Activated naive CD4-positive, alpha-beta T cell treated with anti-CD3 and anti-CD28 coated beads for 36 hours (primary cell): ENCODE measurements at regions of chr2 and their contacts with region 1.

Region 1: DNA sequence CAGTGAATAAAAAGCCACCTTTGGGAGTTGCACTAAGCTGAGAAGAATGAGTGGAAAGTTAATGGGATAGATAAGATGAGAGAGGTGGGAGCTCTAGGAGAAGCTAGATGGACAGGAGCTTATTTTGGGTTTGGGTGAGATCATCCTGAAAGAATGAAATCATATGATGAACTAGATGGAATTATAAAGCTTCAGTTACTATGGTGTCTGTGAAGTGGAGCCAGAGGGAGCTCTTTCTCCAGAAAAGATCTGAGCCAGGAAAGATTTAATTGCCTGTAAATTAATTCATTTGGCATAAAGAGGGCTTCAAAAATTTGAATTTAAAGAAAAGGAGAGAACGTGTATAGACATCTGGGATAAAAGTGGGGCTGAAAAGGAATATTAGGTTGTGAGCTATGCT is 10.3 kb downstream of the DNAH6 start:
- DNase-seq: no peak
- H3K4me3 Mint-ChIP-seq: no peak overlapping the region
- H3K27ac Mint-ChIP-seq: peak overlapping the region; percentile 50
- H3K4me1 Mint-ChIP-seq: peaks cover 17% of the 10 kb centered on the region
- H3K27me3 Mint-ChIP-seq: no peaks in the 10 kb centered on the region

Region 2: DNA sequence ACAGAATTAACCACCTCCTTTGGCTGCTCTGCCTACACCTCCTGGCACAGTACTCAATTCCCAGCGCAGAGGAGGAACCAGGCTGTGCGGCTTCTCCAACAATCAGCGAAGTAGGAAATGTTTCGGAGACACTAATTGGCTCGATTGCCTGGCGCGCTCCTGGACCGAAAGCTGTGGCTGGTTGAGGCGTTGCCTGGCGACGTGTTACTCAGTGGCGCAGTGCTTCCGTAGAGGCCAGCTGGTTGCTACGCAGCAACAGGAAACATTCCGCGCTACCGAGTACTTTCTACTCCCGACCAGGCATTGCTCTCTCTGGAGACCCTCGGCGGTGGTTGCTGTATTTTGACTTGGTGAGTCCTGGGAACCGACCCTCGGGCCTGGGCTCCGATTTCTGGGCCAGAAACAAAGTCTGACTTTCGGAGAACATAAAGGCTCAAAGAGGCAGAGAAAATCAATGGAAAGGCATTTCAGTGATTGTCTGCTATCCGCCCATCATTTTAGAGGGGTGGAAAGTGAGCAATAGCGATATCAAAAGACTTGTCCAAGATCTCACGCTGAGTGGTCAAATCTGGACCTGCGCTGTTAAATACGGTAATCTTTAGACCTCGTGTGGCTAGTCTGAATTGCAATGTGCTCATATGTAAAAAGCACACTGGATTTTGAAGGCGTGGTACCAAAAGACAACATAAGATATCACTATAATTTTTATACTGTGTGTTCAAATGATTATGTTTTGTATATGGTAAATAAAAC is 10.2 kb before region 1 on chr2 and contains the start of gene DNAH6:
- CTCF ChIA-PET with region 1: interaction called, 11 read pairs
- intact Hi-C with region 1: no loop called
- DNase-seq: peak; percentile 94
- H3K4me3 Mint-ChIP-seq: peak within 1 kb of the TSS; percentile 85
- H3K27ac Mint-ChIP-seq: no peak within 1 kb of the TSS
- H3K4me1 Mint-ChIP-seq: peaks cover 22% of the 10 kb centered on the region
- H3K27me3 Mint-ChIP-seq: no peaks in the 10 kb centered on the region
- total RNA-seq, gene DNAH6: 0.07 to 0.62 TPM

Region 3: DNA sequence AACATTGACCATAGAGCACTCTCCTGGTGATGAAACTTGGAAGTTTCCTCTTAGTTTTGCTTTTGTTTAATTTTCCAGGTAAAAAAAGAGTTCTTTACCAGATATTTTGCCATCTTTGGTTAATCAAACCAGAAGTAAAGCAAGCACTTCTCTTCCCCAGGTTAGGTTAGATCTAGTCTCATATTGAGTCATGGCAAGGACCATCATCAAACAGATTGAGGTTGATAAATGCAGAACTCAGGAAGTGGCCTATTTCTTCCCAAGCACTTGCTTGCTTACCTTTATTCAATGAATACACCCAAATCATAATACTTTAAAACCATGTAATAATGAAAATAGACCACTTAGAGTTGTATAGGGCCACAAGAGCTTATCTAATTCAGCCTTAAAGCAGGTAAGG is 13.2 kb after region 1 on chr2:
- CTCF ChIA-PET with region 1: interaction called, 7 read pairs
- intact Hi-C with region 1: loop called (anchors 1 kb)
- DNase-seq: no peak
- H3K4me3 Mint-ChIP-seq: no peak overlapping the region
- H3K27ac Mint-ChIP-seq: no peak overlapping the region
- H3K4me1 Mint-ChIP-seq: peaks cover 7% of the 10 kb centered on the region
- H3K27me3 Mint-ChIP-seq: no peaks in the 10 kb centered on the region

Region 4: GRCh38 chr2:84631047-84631446 is 104.5 kb after region 1 on chr2:
- CTCF ChIA-PET with region 1: interaction called, 3 read pairs
- intact Hi-C with region 1: loop called (anchors 1 kb)
- DNase-seq: no peak
- H3K4me3 Mint-ChIP-seq: no peak overlapping the region
- H3K27ac Mint-ChIP-seq: no peak overlapping the region
- H3K4me1 Mint-ChIP-seq: peaks cover 12% of the 10 kb centered on the region
- H3K27me3 Mint-ChIP-seq: no peaks in the 10 kb centered on the region

Region 5: DNA sequence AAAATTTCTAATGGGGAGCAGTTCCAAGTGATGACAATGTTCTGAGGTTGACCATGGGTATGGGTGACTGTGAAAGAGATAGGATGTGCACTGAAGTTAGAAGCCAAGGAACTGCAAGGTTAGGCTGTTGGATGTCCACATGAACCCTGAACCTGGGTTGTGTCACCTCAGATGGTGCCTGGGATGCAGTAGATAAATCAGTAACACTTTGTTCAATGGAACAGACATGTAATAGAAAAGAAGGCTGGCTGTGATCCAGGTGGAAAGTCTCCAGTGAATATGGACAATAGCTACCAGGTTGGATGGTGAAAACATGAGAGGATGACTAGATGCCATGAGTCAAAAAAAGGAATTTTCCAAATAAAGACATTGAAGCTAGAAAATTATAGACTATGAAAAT is 222.9 kb after region 1 on chr2:
- CTCF ChIA-PET with region 1: no interaction called
- intact Hi-C with region 1: no loop called
- DNase-seq: no peak
- H3K4me3 Mint-ChIP-seq: no peak overlapping the region
- H3K27ac Mint-ChIP-seq: no peak overlapping the region
- H3K4me1 Mint-ChIP-seq: peaks cover 5% of the 10 kb centered on the region
- H3K27me3 Mint-ChIP-seq: no peaks in the 10 kb centered on the region